Heart left ventricle (tissue), 16 donors: ENCODE measurements at regions of chr2 and their contacts with region 1.

Region 1: GRCh38 chr2:47323009-47323821 is 79.7 kb upstream of the MSH2 start:
- DNase-seq: peak; percentile 70 to 81 (median 71)
- ATAC-seq: peak; percentile 90 to 95 (median 94)
- H3K4me3 ChIP-seq: no peak overlapping the region
- H3K27ac ChIP-seq: no peak overlapping the region
- H3K4me1 ChIP-seq: peaks cover 0 to 8% (median 2%) of the 10 kb centered on the region in 12 donors
- H3K27me3 ChIP-seq: no peaks in the 10 kb centered on the region
- CTCF ChIP-seq: peak; percentile 91 to 98 (median 96)
- POLR2A ChIP-seq: no peak

Region 2: GRCh38 chr2:46632349-46632748 is 690.9 kb before region 1 on chr2:
- intact Hi-C with region 1: loop called in 2 of 10 experiments (anchors 5 to 10 kb)
- DNase-seq: no peak
- ATAC-seq: peak in 2 of 4 donors; percentile 37 to 61
- H3K4me3 ChIP-seq: no peak overlapping the region
- H3K27ac ChIP-seq: no peak overlapping the region
- H3K4me1 ChIP-seq: peaks cover 0 to 4% (median 0%) of the 10 kb centered on the region in 12 donors
- H3K27me3 ChIP-seq: no peaks in the 10 kb centered on the region
- CTCF ChIP-seq: peak; percentile 39 to 73 (median 59)
- POLR2A ChIP-seq: no peak

Region 3: GRCh38 chr2:46915811-46916630 is 407.2 kb before region 1 on chr2:
- intact Hi-C with region 1: loop called in 8 of 10 experiments (anchors 2 to 10 kb)
- DNase-seq: peak; percentile 90 to 98 (median 94)
- ATAC-seq: peak; percentile 91 to 96 (median 93)
- H3K4me3 ChIP-seq: peak overlapping the region; percentile 78 to 100 (median 96)
- H3K27ac ChIP-seq: peak overlapping the region; percentile 67 to 99 (median 96)
- H3K4me1 ChIP-seq: peaks cover 0 to 54% (median 32%) of the 10 kb centered on the region in 12 donors
- H3K27me3 ChIP-seq: no peaks in the 10 kb centered on the region
- CTCF ChIP-seq: no peak
- POLR2A ChIP-seq: peak in 1 of 2 donors; percentile 67

Region 4: DNA sequence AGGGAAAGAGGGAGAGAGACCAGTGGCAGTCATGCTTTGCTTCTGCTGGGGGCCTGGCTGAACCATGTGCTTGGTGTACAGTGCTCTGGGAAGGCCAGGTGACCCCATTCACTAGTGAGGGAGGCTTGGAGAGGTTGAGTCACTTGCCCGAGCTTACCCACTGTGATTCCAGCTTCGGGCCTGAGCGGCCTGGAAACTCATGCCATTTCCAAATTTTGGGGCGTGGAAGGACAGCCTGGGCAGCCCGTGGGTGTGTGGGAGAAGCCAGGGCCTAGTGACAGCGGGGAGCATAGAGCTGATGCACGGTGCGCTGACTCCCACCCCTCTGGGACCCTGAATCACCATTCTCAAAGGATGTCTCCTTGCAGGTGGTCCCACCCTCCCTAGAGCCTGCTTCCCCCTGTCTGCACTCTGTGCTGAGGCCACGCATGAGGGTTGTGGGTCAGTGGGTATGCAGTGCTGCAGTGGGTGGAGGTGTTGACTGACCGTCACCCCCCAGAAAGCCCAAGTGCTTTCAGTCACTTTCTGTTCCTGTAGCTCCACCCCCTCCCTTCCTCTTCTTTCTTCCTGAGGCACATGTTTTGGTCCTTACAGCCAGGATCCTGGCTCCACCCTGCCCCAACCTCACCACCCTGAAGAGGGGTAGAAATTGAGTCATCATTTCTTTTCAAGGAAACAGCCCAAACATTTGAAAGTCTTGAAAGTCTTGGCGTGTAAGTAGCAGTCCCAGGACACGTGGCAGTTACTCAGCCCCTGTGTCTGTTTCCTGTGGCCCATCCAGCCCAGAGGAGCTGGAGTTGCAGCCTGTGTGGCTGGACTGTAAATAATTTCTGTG is 338.4 kb before region 1 on chr2:
- intact Hi-C with region 1: loop called in 2 of 10 experiments (anchors 1 to 2 kb)
- DNase-seq: peak in 4 of 5 donors; percentile 50 to 77 (median 65)
- ATAC-seq: peak; percentile 10 to 67 (median 54)
- H3K4me3 ChIP-seq: no peak overlapping the region
- H3K27ac ChIP-seq: peak overlapping the region in 11 of 12 donors; percentile 4 to 88 (median 71)
- H3K4me1 ChIP-seq: peaks cover 10 to 82% (median 69%) of the 10 kb centered on the region in 12 donors
- H3K27me3 ChIP-seq: no peaks in the 10 kb centered on the region
- CTCF ChIP-seq: no peak
- POLR2A ChIP-seq: no peak

Region 5: GRCh38 chr2:47088668-47089462 is 234.3 kb before region 1 on chr2:
- intact Hi-C with region 1: no loop called
- DNase-seq: peak in 3 of 5 donors; percentile 56 to 76 (median 67)
- ATAC-seq: peak; percentile 65 to 86 (median 80)
- H3K4me3 ChIP-seq: no peak overlapping the region
- H3K27ac ChIP-seq: peak overlapping the region in 11 of 12 donors; percentile 19 to 75 (median 63)
- H3K4me1 ChIP-seq: peaks cover 17 to 69% (median 51%) of the 10 kb centered on the region in 12 donors
- H3K27me3 ChIP-seq: no peaks in the 10 kb centered on the region
- CTCF ChIP-seq: no peak
- POLR2A ChIP-seq: no peak

Region 6: DNA sequence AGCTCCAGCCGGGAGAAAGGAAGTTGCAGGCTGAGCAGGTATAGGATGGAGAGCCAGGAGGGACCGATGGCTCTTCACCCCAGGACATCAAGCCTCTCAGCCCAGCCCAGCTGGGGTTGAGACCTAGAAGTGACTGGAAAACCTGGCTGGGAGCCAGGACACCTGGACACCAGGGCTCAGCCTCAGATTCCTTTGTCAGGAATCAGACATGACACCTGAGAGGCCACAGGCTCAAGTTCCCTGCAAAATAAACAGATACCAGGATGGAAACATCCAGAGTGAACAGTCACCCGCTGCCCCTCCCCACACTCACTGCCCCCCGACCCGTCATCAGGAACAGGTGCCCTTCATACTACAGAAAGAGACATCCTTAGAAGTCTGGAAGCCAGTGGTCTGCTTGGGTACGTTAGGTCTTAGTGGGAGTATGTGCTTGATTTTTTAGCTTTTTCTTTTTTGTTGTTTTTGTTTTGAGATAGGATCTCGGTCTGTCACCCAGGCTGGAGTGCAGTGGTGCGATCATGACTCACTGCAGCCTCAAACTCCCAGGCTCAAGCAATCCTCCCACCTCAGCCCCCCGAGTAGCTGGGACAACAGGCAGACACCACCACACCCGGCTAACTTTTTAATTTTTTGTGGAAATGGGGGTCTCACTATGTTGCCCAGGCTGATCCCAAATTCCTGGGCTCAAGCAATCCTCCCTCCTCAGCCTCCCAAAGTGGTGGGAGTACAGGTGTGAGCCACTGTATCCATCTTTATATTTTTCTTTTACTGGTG is 72.4 kb before region 1 on chr2:
- intact Hi-C with region 1: no loop called
- DNase-seq: no peak
- ATAC-seq: no peak
- H3K4me3 ChIP-seq: no peak overlapping the region
- H3K27ac ChIP-seq: no peak overlapping the region
- H3K4me1 ChIP-seq: peaks cover 0 to 5% (median 0%) of the 10 kb centered on the region in 12 donors
- H3K27me3 ChIP-seq: no peaks in the 10 kb centered on the region
- CTCF ChIP-seq: no peak
- POLR2A ChIP-seq: no peak

Region 7: GRCh38 chr2:47272031-47272864 is 51.0 kb before region 1 on chr2:
- intact Hi-C with region 1: loop called in 1 of 10 experiments (anchors 5 kb)
- DNase-seq: peak; percentile 65 to 86 (median 83)
- ATAC-seq: peak; percentile 70 to 83 (median 79)
- H3K4me3 ChIP-seq: peak overlapping the region; percentile 4 to 60 (median 46)
- H3K27ac ChIP-seq: peak overlapping the region; percentile 15 to 81 (median 72)
- H3K4me1 ChIP-seq: peaks cover 4 to 57% (median 38%) of the 10 kb centered on the region in 12 donors
- H3K27me3 ChIP-seq: no peaks in the 10 kb centered on the region
- CTCF ChIP-seq: peak; percentile 95 to 100 (median 99)
- POLR2A ChIP-seq: no peak

Region 8: GRCh38 chr2:47528874-47529273 is 205.7 kb after region 1 on chr2:
- intact Hi-C with region 1: no loop called
- DNase-seq: no peak
- ATAC-seq: no peak
- H3K4me3 ChIP-seq: no peak overlapping the region
- H3K27ac ChIP-seq: no peak overlapping the region
- H3K4me1 ChIP-seq: peaks cover 0 to 17% (median 0%) of the 10 kb centered on the region in 12 donors
- H3K27me3 ChIP-seq: no peaks in the 10 kb centered on the region
- CTCF ChIP-seq: no peak
- POLR2A ChIP-seq: no peak